Tibial artery (tissue), 4 donors: ENCODE measurements at regions of chr16 and their contacts with region 1.

Region 1: GRCh38 chr16:55465077-55465896 is 13.7 kb upstream of the MMP2 start:
- DNase-seq: peak; percentile 89 to 92
- H3K4me3 ChIP-seq: no peak overlapping the region
- H3K27ac ChIP-seq: no peak overlapping the region
- H3K4me1 ChIP-seq: peaks cover 0 to 3% (median under 1%) of the 10 kb centered on the region in 4 donors
- H3K27me3 ChIP-seq: no peaks in the 10 kb centered on the region
- CTCF ChIP-seq: peak; percentile 99 to 100

Region 2: DNA sequence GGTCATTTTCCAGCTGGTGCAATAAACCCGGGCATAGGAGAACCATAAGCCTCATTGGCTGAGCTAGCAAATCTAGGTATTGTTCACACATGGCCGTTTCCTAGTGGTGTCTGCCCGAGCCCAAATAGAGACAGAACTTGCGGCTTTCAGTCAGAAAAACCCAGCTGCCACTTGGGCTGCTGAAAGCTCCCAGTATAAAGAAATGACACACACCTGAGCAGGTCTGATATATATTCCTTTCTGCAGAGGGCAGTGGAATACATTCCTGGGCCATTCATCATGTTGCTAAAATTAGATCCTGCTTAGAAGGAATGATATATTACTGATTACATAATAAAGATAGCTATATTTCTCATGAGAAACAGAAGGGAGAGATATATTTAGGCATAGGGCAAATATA is 618.5 kb before region 1 on chr16:
- intact Hi-C with region 1: no loop called
- DNase-seq: no peak
- H3K4me3 ChIP-seq: no peak overlapping the region
- H3K27ac ChIP-seq: no peak overlapping the region
- H3K4me1 ChIP-seq: peaks cover 0 to 16% (median 4%) of the 10 kb centered on the region in 4 donors
- H3K27me3 ChIP-seq: no peaks in the 10 kb centered on the region
- CTCF ChIP-seq: no peak

Region 3: GRCh38 chr16:55398762-55399161 is 66.5 kb before region 1 on chr16:
- intact Hi-C with region 1: no loop called
- DNase-seq: no peak
- H3K4me3 ChIP-seq: no peak overlapping the region
- H3K27ac ChIP-seq: no peak overlapping the region
- H3K4me1 ChIP-seq: peaks cover 0 to 6% (median 3%) of the 10 kb centered on the region in 4 donors
- H3K27me3 ChIP-seq: peaks cover 0 to 8% of the 10 kb centered on the region in 2 donors
- CTCF ChIP-seq: no peak

Region 4: DNA sequence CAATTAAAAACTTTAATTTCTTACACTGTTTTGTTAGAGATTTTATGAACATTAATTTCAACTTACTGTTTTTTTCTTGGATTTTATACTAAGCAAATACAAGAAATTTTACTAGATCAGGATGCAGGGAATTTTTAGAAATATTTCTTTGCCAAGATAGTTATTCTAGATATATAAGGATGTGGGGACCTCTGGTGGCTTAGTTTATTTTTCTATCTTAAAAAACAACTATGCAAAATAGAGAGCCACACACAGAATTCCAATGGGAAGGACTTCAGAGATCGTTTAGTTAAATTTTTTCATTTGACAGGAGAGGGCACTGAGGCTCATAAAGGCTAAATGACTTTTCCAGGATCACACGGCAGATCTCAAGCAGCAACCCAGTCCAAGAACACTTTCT is 78.2 kb after region 1 on chr16:
- intact Hi-C with region 1: loop called (anchors 2 kb)
- DNase-seq: no peak
- H3K4me3 ChIP-seq: no peak overlapping the region
- H3K27ac ChIP-seq: no peak overlapping the region
- H3K4me1 ChIP-seq: no peaks in the 10 kb centered on the region
- H3K27me3 ChIP-seq: no peaks in the 10 kb centered on the region
- CTCF ChIP-seq: peak; percentile 28 to 68

Region 5: DNA sequence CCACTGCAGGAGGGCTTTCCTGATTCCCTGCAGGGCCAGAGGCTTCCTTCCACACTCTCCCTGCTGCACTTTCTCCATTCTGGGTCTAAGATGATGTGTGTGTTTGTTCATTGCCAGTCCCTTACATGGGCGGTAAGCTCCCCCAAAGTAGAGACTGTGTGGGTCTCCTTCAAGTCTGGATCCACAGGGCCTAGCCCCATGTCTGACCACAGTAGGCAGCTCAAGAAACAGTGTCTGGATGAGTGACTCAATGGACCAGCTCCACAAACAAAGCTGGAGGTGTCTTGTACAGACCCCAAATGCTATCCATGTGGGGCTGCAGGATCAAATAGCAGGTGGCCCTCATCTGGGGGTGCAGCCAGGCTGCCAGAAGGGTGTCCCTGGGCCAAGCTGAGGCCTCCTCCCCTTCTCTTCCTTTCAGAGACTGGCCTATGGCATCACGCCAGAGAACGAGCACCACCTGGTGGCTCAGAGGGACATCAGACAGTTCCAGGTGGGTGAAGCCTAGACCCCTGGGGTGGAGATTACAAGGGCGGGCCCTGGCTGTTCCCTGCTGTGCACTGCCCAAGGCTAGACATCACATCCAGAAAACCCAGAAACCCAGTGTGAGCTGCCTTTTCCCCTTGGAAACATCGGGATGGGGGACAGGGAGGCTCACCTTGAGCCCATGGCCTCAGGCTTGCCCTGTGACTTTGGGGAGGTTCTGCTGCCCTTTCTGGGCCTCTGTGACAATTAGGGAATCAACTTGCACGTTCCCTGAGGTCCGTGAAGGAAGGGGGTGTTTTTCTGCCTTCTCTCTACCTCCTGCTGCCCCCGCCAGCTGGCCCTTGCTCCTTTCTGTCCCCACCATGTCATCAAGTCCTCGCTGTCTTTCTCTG is 236.4 kb after region 1 on chr16:
- intact Hi-C with region 1: loop called (anchors 5 kb)
- DNase-seq: peak in 1 of 2 donors; percentile 39
- H3K4me3 ChIP-seq: no peak overlapping the region
- H3K27ac ChIP-seq: no peak overlapping the region
- H3K4me1 ChIP-seq: no peaks in the 10 kb centered on the region
- H3K27me3 ChIP-seq: peaks cover 0 to 18% of the 10 kb centered on the region in 2 donors
- CTCF ChIP-seq: peak; percentile 21 to 24

Region 6: GRCh38 chr16:55842369-55843104 is 377.2 kb after region 1 on chr16:
- intact Hi-C with region 1: loop called (anchors 5 kb)
- DNase-seq: no peak
- H3K4me3 ChIP-seq: no peak overlapping the region
- H3K27ac ChIP-seq: no peak overlapping the region
- H3K4me1 ChIP-seq: no peaks in the 10 kb centered on the region
- H3K27me3 ChIP-seq: peaks cover 0 to 24% of the 10 kb centered on the region in 2 donors
- CTCF ChIP-seq: peak; percentile 69 to 75

Region 7: GRCh38 chr16:56744996-56745640 is 1279.8 kb after region 1 on chr16:
- intact Hi-C with region 1: no loop called
- DNase-seq: no peak
- H3K4me3 ChIP-seq: no peak overlapping the region
- H3K27ac ChIP-seq: peak overlapping the region in 1 of 2 donors; percentile 64
- H3K4me1 ChIP-seq: peaks cover 0 to 66% (median 17%) of the 10 kb centered on the region in 4 donors
- H3K27me3 ChIP-seq: no peaks in the 10 kb centered on the region
- CTCF ChIP-seq: no peak